ENCODE measurements at regions of chr6 and their contacts with region 1.

Region 1: GRCh38 chr6:44655412-44656342 is 268.2 kb downstream of the CDC5L start:
- DNase-seq: peak; percentile 86

Region 2: GRCh38 chr6:45421709-45422502 is 766.2 kb after region 1 on chr6:
- intact Hi-C with region 1: loop called (anchors 5 kb)
- DNase-seq: peak; percentile 84

Region 3: DNA sequence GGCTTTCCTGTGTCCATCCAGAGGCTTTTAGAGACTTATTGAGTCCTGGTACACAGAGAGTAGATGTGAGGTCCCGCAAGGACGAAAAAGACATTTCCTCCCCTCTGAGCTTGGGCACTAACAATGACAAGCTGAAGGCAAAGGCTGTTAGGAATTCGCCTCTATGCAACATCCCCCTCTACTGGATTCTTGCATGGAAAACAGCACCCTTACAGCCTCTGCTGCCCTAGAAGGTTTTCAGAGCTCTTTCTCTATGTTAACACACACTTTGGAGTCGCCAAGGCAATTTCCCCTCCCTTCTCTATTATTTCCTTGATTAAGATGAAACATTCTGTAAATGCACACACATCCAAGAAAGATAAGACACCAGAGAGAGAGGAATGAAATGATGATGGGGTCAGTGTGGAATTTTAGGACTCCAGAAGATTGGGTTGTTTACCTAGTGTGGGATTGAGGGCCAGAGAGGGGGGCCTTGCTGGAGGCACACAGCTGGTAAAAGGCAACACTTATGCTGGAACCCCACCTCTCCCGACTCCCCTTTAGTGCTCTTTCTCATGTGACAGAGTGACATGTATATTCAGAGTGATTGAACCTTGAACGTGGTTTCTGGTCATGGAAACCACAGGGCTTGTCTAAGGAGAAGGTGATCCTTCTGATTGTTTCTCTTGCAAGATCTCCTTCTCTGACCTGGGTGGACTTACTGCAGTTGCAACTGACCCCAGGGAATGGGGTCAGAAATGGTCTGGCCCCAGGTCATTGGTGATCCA is 1059.2 kb after region 1 on chr6:
- intact Hi-C with region 1: loop called (anchors 1 kb)
- DNase-seq: no peak

Region 4: GRCh38 chr6:45922728-45923351 is 1267.2 kb after region 1 on chr6:
- intact Hi-C with region 1: loop called (anchors 5 kb)
- DNase-seq: peak; percentile 84